ENCODE measurements at regions of chr15 and their contacts with region 1.

Region 1: GRCh38 chr15:25385986-25386385 is 52.8 kb downstream of the UBE3A start:
- DNase-seq: no peak
- H3K4me3 ChIP-seq: no peak overlapping the region
- H3K27ac ChIP-seq: no peak overlapping the region
- H3K4me1 ChIP-seq: no peaks in the 10 kb centered on the region
- H3K27me3 ChIP-seq: no peaks in the 10 kb centered on the region
- CTCF ChIP-seq: no peak

Region 2: GRCh38 chr15:25372298-25372697 is 13.7 kb before region 1 on chr15:
- CTCF ChIA-PET with region 1: no interaction called
- POLR2A ChIA-PET with region 1: no interaction called
- intact Hi-C with region 1: no loop called
- DNase-seq: no peak
- H3K4me3 ChIP-seq: no peak overlapping the region
- H3K27ac ChIP-seq: no peak overlapping the region
- H3K4me1 ChIP-seq: no peaks in the 10 kb centered on the region
- H3K27me3 ChIP-seq: no peaks in the 10 kb centered on the region
- CTCF ChIP-seq: no peak

Region 3: GRCh38 chr15:25438601-25439368 is 52.8 kb after region 1 on chr15 and contains the start of gene UBE3A:
- CTCF ChIA-PET with region 1: no interaction called
- POLR2A ChIA-PET with region 1: interaction called, 12 read pairs
- intact Hi-C with region 1: no loop called
- DNase-seq: peak; percentile 58 to 91
- H3K4me3 ChIP-seq: peak within 1 kb of the TSS; percentile 92
- H3K27ac ChIP-seq: peak within 1 kb of the TSS; percentile 69
- H3K4me1 ChIP-seq: peaks cover 18% of the 10 kb centered on the region; the same call in 1 of the 2 replicates
- H3K27me3 ChIP-seq: no peaks in the 10 kb centered on the region
- CTCF ChIP-seq: no peak; the same call in 1 of the 2 replicates
- total RNA-seq, gene UBE3A: 65.2 and 69.8 TPM in 2 replicates

Measured in PC-9 (cell line).